ENCODE measurements at regions of chr10 and their contacts with region 1.

Region 1: GRCh38 chr10:60237977-60238758 is 151.5 kb downstream of the ANK3 start:
- DNase-seq: peak; percentile 68
- ATAC-seq: peak; percentile 40
- H3K4me3 ChIP-seq: peak overlapping the region in 4 of 5 experiments; percentile 32 to 68 (median 52)
- H3K4me3 Mint-ChIP-seq: peak overlapping the region; percentile 74
- H3K27ac ChIP-seq: peak overlapping the region; percentile 83 to 93
- H3K27ac Mint-ChIP-seq: peak overlapping the region; percentile 92
- H3K4me1 ChIP-seq: peaks cover 56 to 57% of the 10 kb centered on the region in 2 donors
- H3K4me1 Mint-ChIP-seq: peaks cover 56% of the 10 kb centered on the region
- H3K27me3 ChIP-seq: no peaks in the 10 kb centered on the region
- H3K27me3 Mint-ChIP-seq: no peaks in the 10 kb centered on the region
- CTCF ChIP-seq: peak; percentile 49

Region 2: GRCh38 chr10:59625721-59626522 is 612.2 kb before region 1 on chr10:
- CTCF ChIA-PET with region 1: interaction called, 12 read pairs
- POLR2A ChIA-PET with region 1: no interaction called
- intact Hi-C with region 1: no loop called
- DNase-seq: peak; percentile 78
- ATAC-seq: peak; percentile 89
- H3K4me3 ChIP-seq: no peak overlapping the region
- H3K4me3 Mint-ChIP-seq: no peak overlapping the region
- H3K27ac ChIP-seq: no peak overlapping the region
- H3K27ac Mint-ChIP-seq: no peak overlapping the region
- H3K4me1 ChIP-seq: no peaks in the 10 kb centered on the region
- H3K4me1 Mint-ChIP-seq: peaks cover 3% of the 10 kb centered on the region
- H3K27me3 ChIP-seq: no peaks in the 10 kb centered on the region
- H3K27me3 Mint-ChIP-seq: no peaks in the 10 kb centered on the region
- CTCF ChIP-seq: peak; percentile 87

Region 3: GRCh38 chr10:59678884-59679301 is 559.3 kb before region 1 on chr10:
- CTCF ChIA-PET with region 1: no interaction called
- POLR2A ChIA-PET with region 1: no interaction called
- intact Hi-C with region 1: no loop called
- DNase-seq: no peak
- ATAC-seq: no peak
- H3K4me3 ChIP-seq: no peak overlapping the region
- H3K4me3 Mint-ChIP-seq: no peak overlapping the region
- H3K27ac ChIP-seq: no peak overlapping the region
- H3K27ac Mint-ChIP-seq: no peak overlapping the region
- H3K4me1 ChIP-seq: peaks cover 8 to 17% of the 10 kb centered on the region in 2 donors
- H3K4me1 Mint-ChIP-seq: peaks cover 11% of the 10 kb centered on the region
- H3K27me3 ChIP-seq: no peaks in the 10 kb centered on the region
- H3K27me3 Mint-ChIP-seq: no peaks in the 10 kb centered on the region
- CTCF ChIP-seq: no peak

Region 4: DNA sequence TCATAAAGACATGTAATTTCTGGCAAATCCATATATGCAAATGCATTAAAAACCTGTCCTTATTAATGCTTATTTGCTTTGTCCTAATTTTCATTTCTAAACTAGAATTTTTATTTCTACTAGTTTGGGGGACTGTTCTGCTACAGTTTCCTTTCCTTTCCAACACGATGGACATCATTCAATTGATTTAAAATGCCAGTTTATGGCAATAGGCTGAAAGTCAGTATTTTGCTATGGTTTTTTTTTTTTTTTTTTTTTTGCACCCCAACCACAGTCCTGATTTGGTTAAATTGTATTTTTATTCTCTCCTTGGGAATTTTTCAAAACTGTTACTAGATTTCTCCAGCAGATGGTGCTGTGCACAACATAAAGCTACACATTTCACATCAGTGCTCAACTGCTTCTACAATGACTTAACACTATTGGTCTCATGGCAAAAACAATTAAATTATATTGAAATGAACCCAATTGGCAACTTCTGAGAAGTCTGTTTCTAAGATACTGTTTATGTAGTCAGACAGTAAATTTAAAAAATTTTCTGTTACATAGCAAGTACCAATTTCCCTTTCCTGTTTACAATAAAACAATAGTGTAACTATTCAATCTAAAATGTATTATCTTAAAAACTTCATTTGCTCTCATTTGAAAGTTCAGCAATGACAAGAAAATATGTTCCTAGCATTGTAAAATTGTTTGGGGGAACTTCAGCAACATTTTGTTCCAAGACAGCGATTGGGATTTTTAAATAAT is 138.0 kb before region 1 on chr10:
- CTCF ChIA-PET with region 1: interaction called, 28 read pairs
- POLR2A ChIA-PET with region 1: no interaction called
- intact Hi-C with region 1: no loop called
- DNase-seq: peak; percentile 61
- ATAC-seq: peak; percentile 49
- H3K4me3 ChIP-seq: no peak overlapping the region
- H3K4me3 Mint-ChIP-seq: no peak overlapping the region
- H3K27ac ChIP-seq: no peak overlapping the region
- H3K27ac Mint-ChIP-seq: no peak overlapping the region
- H3K4me1 ChIP-seq: no peaks in the 10 kb centered on the region
- H3K4me1 Mint-ChIP-seq: no peaks in the 10 kb centered on the region
- H3K27me3 ChIP-seq: no peaks in the 10 kb centered on the region
- H3K27me3 Mint-ChIP-seq: peaks cover 4% of the 10 kb centered on the region
- CTCF ChIP-seq: peak; percentile 89

Region 5: GRCh38 chr10:60282771-60283353 is 44.7 kb after region 1 on chr10:
- CTCF ChIA-PET with region 1: interaction called, 9 read pairs
- POLR2A ChIA-PET with region 1: no interaction called
- intact Hi-C with region 1: loop called (anchors 2 kb)
- DNase-seq: peak; percentile 5
- ATAC-seq: peak; percentile 91
- H3K4me3 ChIP-seq: peak overlapping the region in 1 of 5 experiments; percentile 1
- H3K4me3 Mint-ChIP-seq: peak overlapping the region; percentile 50
- H3K27ac ChIP-seq: peak overlapping the region in 1 of 2 donors; percentile 52
- H3K27ac Mint-ChIP-seq: peak overlapping the region; percentile 71
- H3K4me1 ChIP-seq: peaks cover 3 to 22% of the 10 kb centered on the region in 2 donors
- H3K4me1 Mint-ChIP-seq: peaks cover 30% of the 10 kb centered on the region
- H3K27me3 ChIP-seq: no peaks in the 10 kb centered on the region
- H3K27me3 Mint-ChIP-seq: no peaks in the 10 kb centered on the region
- CTCF ChIP-seq: no peak

Region 6: DNA sequence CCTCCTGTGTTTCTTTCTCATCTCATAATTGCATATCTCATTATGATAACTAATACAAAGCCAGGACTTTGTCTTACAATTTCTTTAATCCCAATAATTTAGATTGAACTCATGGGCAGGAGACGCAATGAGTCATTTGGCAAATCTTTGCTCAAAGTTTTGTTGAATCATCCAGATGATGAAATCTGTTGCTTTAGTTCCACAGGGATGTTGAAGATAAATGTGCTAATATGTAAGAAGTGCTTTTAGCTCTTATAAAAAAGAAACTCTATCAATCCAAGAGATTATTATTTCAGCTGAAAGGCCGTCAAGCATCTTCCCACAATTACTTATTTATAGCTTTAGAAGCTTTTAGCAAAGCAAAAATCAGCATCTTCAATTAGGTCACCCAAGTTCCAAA is 188.2 kb after region 1 on chr10:
- CTCF ChIA-PET with region 1: interaction called, 48 read pairs
- POLR2A ChIA-PET with region 1: no interaction called
- intact Hi-C with region 1: no loop called
- DNase-seq: no peak
- ATAC-seq: no peak
- H3K4me3 ChIP-seq: no peak overlapping the region
- H3K4me3 Mint-ChIP-seq: no peak overlapping the region
- H3K27ac ChIP-seq: no peak overlapping the region
- H3K27ac Mint-ChIP-seq: no peak overlapping the region
- H3K4me1 ChIP-seq: peaks cover 0 to 9% of the 10 kb centered on the region in 2 donors
- H3K4me1 Mint-ChIP-seq: peaks cover 6% of the 10 kb centered on the region
- H3K27me3 ChIP-seq: no peaks in the 10 kb centered on the region
- H3K27me3 Mint-ChIP-seq: no peaks in the 10 kb centered on the region
- CTCF ChIP-seq: no peak

Region 7: DNA sequence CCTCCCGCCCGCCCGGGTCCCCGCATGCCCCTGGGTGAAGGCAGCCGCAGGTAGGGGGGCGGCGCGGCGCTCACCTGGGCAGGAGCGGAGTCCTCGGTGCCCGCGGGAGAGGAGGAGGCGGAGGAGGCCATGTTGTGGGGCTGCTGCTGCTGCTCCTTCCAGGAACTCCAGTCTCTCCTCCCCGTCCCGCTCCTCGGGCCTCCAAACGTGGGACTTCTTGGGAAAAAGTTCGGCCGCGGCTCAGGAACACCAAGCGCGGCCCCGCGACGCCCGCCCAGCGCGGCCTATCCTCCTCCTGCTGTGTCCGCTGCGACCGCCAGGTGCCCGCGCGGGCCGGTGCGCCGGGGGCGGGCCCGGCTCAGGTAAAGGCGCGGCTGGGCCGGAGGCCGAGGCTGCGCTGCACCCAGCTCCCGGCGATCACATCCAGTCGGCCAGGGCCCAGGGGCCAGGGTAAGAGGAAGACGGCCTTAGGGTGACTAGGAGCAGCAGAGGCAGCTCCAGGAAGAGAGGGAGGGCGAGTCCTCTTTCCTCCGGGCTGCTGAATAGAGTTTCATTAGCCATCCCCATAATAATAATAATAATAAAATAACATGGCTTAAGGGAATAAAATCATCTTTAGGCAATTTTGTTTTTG is 495.1 kb after region 1 on chr10:
- CTCF ChIA-PET with region 1: no interaction called
- POLR2A ChIA-PET with region 1: no interaction called
- intact Hi-C with region 1: loop called (anchors 1 kb)
- DNase-seq: peak; percentile 70
- ATAC-seq: peak; percentile 83
- H3K4me3 ChIP-seq: peak overlapping the region in 4 of 5 experiments; percentile 57 to 83 (median 71)
- H3K4me3 Mint-ChIP-seq: peak overlapping the region; percentile 76
- H3K27ac ChIP-seq: peak overlapping the region in 1 of 2 donors; percentile 71
- H3K27ac Mint-ChIP-seq: peak overlapping the region; percentile 72
- H3K4me1 ChIP-seq: peaks cover 21% of the 10 kb centered on the region in 2 donors
- H3K4me1 Mint-ChIP-seq: peaks cover 30% of the 10 kb centered on the region
- H3K27me3 ChIP-seq: peaks cover 0 to 21% (median 9%) of the 10 kb centered on the region in 4 experiments
- H3K27me3 Mint-ChIP-seq: no peaks in the 10 kb centered on the region
- CTCF ChIP-seq: peak; percentile 68